ENCODE measurements at regions of chr1 and their contacts with region 1.

Region 1: GRCh38 chr1:19811206-19811851 is 3.8 kb downstream of the RNF186 start:
- DNase-seq: no peak
- H3K4me3 ChIP-seq: no peak overlapping the region
- CTCF ChIP-seq: peak; percentile 51

Region 2: DNA sequence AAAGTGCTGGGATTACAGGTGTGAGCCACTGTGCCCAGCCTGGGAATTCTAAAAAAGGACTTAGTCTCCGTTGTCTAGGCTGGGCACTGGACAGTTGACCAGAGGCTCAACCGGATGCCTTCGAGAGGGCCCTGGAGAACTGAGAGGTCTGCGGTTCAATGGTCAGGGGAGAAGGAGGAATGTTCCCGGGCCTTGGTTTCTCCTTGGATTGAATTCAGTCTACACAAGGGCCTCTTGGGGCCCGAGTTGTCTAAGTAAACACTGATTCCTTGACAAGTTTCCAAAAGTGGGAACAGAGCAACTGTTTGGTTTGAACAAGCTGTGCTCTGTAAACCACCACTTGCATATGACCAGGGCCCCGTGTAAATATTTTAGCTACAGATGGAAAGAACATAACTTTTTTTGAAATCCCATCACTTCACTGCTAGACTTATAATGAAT is 296.9 kb before region 1 on chr1:
- in situ Hi-C with region 1: no loop called
- DNase-seq: peak; percentile 39
- H3K4me3 ChIP-seq: no peak overlapping the region
- CTCF ChIP-seq: no peak

Region 3: DNA sequence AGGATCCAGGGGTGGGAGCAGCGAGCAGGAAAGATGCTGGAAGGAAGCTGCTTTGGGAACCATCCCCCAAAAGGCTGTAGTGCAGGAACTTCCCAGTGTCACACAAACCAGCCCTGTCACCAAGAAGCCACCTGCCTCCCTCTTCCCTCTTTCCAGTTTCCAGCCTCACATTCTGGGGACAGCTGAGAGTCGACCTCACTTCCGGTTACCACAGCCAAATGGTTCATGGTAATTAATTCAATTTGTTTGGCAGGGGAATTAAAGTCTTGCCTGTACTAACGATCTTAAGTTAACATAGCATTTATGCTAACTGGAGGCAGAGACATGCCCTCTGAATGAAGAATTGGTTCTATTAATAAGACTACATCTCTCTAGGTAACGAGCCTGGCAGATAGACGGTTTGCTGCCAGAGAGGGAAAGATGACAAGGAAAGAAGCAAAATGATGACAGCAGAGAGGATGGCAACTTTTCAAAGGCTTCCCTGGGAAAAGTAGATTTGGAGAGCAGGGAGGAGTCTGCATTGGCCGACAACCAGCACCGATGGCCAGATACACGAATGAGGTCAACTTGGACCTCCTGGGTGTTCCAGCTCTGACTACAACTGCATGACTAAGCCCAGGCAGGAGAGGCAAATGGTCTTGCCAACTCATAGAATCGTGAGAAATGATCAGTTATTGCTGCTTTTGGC is 75.7 kb before region 1 on chr1:
- in situ Hi-C with region 1: no loop called
- DNase-seq: peak; percentile 98
- H3K4me3 ChIP-seq: no peak overlapping the region
- CTCF ChIP-seq: no peak

Region 4: DNA sequence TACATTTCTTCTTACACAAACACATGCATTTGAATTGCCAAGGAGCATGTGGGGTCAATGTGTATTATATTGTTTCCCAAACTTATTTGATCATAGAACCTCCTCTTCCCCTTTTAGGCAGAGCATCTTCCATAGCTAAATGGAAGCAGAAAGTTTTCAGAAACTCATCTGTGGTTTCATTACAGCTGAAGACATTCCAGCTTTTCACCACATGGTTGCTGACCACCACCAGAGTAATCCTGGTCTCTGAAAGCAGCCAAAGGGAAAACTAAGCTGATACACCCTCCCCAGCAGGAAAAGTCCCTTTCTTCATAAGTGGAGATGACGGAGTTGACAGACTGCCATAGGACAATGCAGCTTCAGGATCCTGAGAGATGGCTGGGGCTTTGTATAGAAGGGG is 40.7 kb after region 1 on chr1:
- in situ Hi-C with region 1: loop called (anchors 5 kb)
- DNase-seq: peak; percentile 9
- H3K4me3 ChIP-seq: no peak overlapping the region
- CTCF ChIP-seq: no peak

Region 5: GRCh38 chr1:20416706-20417105 is 605.4 kb after region 1 on chr1:
- in situ Hi-C with region 1: no loop called
- DNase-seq: no peak
- H3K4me3 ChIP-seq: no peak overlapping the region
- CTCF ChIP-seq: no peak